ENCODE measurements at regions of chr11 and their contacts with region 1.

Region 1: GRCh38 chr11:66694732-66695207 is 17.1 kb upstream of the RBM4B start:
- DNase-seq: peak; percentile 97
- H3K4me3 ChIP-seq: no peak overlapping the region
- H3K27ac ChIP-seq: no peak overlapping the region
- H3K4me1 ChIP-seq: no peaks in the 10 kb centered on the region
- H3K27me3 ChIP-seq: no peaks in the 10 kb centered on the region

Region 2: GRCh38 chr11:66762088-66762487 is 67.3 kb after region 1 on chr11:
- in situ Hi-C with region 1: no loop called
- DNase-seq: no peak
- H3K4me3 ChIP-seq: no peak overlapping the region
- H3K27ac ChIP-seq: no peak overlapping the region
- H3K4me1 ChIP-seq: no peaks in the 10 kb centered on the region
- H3K27me3 ChIP-seq: no peaks in the 10 kb centered on the region

Region 3: DNA sequence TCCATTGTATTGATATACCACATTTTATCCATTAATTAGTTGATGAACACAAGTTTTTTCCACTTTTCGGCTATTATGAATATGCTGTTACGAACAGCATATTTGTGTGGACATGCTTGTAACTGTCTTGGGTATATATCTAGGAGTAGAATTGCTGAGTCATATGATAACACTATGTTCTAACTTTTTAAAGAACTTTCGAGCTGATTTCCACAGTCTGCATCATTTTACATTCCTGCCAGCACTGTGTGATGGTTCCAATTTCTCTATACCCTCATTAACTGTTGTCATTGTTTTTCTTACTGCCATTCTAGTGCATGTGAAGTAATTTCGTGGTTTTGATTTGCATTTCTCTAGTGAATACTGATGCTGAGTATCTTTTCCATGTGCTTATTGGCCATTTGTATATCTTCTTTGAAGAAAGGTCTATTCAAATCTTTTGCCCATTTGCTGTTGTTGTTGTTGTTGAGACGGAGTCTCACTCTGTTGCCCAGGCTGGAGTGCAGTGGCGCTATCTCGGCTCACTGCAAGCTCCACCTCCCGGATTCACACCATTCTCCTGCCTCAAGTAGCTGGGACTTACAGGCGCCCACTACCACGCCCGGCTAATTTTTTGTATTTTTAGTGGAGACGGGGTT is 141.1 kb after region 1 on chr11:
- in situ Hi-C with region 1: loop called (anchors 10 kb)
- DNase-seq: peak; percentile 47
- H3K4me3 ChIP-seq: no peak overlapping the region
- H3K27ac ChIP-seq: peak overlapping the region; percentile 49
- H3K4me1 ChIP-seq: peaks cover 9% of the 10 kb centered on the region; the same call in 1 of the 2 replicates
- H3K27me3 ChIP-seq: no peaks in the 10 kb centered on the region

Region 4: DNA sequence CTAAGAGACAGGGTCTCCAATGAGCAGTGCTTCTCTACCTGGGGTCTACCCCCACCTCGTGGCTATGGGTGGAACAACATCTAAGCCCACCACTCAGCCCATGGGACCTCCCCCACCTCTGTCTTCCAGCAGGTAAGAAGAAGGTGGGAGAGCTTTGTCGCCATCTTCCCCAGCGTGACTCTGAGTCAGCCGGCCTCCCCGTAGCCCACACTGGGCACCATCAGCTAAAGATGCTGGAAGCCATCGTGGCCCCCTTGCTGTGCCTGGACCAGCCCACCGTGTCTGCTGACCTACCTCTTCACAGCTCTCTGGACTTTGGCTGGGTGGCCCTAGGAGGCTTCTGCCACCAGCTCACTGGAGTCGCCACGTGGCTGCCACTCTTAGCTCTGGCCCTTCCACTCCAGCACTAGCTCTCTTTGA is 281.3 kb after region 1 on chr11:
- in situ Hi-C with region 1: loop called (anchors 10 kb)
- DNase-seq: no peak
- H3K4me3 ChIP-seq: no peak overlapping the region
- H3K27ac ChIP-seq: no peak overlapping the region
- H3K4me1 ChIP-seq: peaks cover 15% of the 10 kb centered on the region
- H3K27me3 ChIP-seq: no peaks in the 10 kb centered on the region